Naive thymus-derived CD4-positive, alpha-beta T cell (primary cell): ENCODE measurements at regions of chr16 and their contacts with region 1.

Region 1: GRCh38 chr16:85759631-85760419 is 8.9 kb upstream of the C16orf74 start:
- DNase-seq: no peak
- ATAC-seq: peak; percentile 60
- H3K4me3 ChIP-seq: no peak overlapping the region
- H3K4me3 Mint-ChIP-seq: no peak overlapping the region
- H3K27ac ChIP-seq: no peak overlapping the region
- H3K27ac Mint-ChIP-seq: peak overlapping the region in 1 of 9 donors; percentile 41
- H3K4me1 ChIP-seq: no peaks in the 10 kb centered on the region
- H3K4me1 Mint-ChIP-seq: peaks cover 7 to 11% (median 7%) of the 10 kb centered on the region in 7 donors
- H3K27me3 ChIP-seq: no peaks in the 10 kb centered on the region
- H3K27me3 Mint-ChIP-seq: peaks cover 11 to 21% (median 17%) of the 10 kb centered on the region in 5 donors

Region 2: GRCh38 chr16:85659805-85660495 is 99.9 kb before region 1 on chr16:
- CTCF ChIA-PET with region 1: interaction called, 14 read pairs
- POLR2A ChIA-PET with region 1: no interaction called
- intact Hi-C with region 1: loop called in 1 of 2 experiments (anchors 1 kb)
- DNase-seq: peak in 8 of 9 donors; percentile 16 to 66 (median 48)
- ATAC-seq: peak; percentile 80
- H3K4me3 ChIP-seq: no peak overlapping the region
- H3K4me3 Mint-ChIP-seq: no peak overlapping the region
- H3K27ac ChIP-seq: no peak overlapping the region
- H3K27ac Mint-ChIP-seq: peak overlapping the region in 1 of 9 donors; percentile 69
- H3K4me1 ChIP-seq: no peaks in the 10 kb centered on the region
- H3K4me1 Mint-ChIP-seq: peaks cover 0 to 4% (median 0%) of the 10 kb centered on the region in 7 donors
- H3K27me3 ChIP-seq: no peaks in the 10 kb centered on the region
- H3K27me3 Mint-ChIP-seq: no peaks in the 10 kb centered on the region

Region 3: GRCh38 chr16:85675251-85675927 is 84.4 kb before region 1 on chr16:
- CTCF ChIA-PET with region 1: no interaction called
- POLR2A ChIA-PET with region 1: no interaction called
- intact Hi-C with region 1: loop called in 1 of 2 experiments (anchors 1 kb)
- DNase-seq: no peak
- ATAC-seq: no peak
- H3K4me3 ChIP-seq: no peak overlapping the region
- H3K4me3 Mint-ChIP-seq: no peak overlapping the region
- H3K27ac ChIP-seq: no peak overlapping the region
- H3K27ac Mint-ChIP-seq: no peak overlapping the region
- H3K4me1 ChIP-seq: no peaks in the 10 kb centered on the region
- H3K4me1 Mint-ChIP-seq: peaks cover 0 to 14% (median 0%) of the 10 kb centered on the region in 7 donors
- H3K27me3 ChIP-seq: no peaks in the 10 kb centered on the region
- H3K27me3 Mint-ChIP-seq: no peaks in the 10 kb centered on the region